Psoas muscle (tissue), 8 donors: ENCODE measurements at regions of chr3 and their contacts with region 1.

Region 1: DNA sequence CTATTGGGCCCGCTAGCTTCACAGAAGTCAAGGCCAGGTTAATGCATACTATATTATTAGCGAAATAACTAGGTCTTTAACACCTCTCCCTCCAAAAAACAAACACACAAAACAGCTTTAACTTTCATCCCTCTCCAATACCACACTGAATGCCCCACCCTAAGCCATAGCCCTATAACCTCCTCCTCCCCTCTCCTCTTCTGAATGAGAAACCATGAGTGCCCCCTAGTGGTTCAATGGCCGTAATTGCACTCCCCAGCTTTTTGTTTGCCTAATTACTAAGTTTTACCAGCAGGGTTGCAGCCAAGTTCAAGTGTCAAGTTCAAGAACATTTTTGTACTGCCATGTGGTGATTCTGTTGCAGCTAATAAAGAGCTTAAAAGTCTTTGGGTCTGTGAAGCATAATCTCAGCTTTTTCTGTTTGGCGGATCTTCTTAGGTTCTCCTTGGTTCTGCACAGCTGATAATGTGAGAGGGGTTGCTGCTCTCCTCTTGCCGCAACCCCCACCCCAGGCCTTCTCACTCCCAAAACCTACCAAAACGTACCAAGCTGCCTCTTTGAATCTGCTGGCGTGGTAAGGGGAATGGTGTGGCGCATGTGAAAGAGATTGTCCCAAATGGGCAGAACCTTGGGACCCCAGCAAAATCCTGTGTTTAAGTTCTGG is 57.9 kb downstream of the RPL22L1 start:
- DNase-seq: peak; percentile 23 to 56
- ATAC-seq: peak in 3 of 4 donors; percentile 74 to 79 (median 77)
- H3K4me3 ChIP-seq: no peak overlapping the region
- H3K27ac ChIP-seq: no peak overlapping the region
- H3K4me1 ChIP-seq: no peaks in the 10 kb centered on the region
- H3K27me3 ChIP-seq: no peaks in the 10 kb centered on the region
- CTCF ChIP-seq: peak; percentile 73

Region 2: DNA sequence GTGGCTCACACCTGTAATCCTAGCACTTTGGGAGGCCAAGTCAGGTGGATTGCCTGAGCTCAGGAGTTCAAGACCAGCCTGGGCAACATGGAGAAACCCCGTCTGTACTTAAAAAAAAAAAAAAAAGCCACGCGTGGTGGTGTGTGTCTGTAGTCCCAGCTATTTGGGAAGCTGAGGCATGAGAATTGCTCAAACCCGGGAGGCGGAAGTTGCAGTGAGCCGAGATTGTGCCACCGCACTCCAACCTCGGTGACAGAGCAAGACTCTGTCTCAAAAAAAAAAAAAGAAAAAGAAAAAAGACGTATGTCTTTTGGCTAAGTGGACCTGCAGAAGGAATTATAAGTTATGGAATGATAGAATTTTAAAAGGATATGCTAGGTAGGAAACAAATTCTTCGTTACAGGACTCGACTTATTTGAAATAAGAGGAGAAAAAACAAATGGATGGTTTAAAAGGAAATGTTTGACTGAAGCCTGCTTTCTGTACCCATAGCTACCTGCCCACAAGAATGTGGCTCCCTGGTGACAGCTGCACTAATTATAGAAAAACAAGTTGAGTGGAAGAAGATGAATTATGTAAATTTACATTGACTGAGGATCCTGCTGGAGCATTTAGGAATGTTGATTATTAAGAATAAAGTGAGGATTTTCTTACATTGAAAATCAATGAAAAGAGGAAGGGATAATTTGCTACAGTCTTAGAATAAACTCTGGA is 490.6 kb before region 1 on chr3:
- intact Hi-C with region 1: loop called in 1 of 2 experiments (anchors 10 kb)
- DNase-seq: no peak
- ATAC-seq: no peak
- H3K4me3 ChIP-seq: no peak overlapping the region
- H3K27ac ChIP-seq: no peak overlapping the region
- H3K4me1 ChIP-seq: no peaks in the 10 kb centered on the region
- H3K27me3 ChIP-seq: no peaks in the 10 kb centered on the region
- CTCF ChIP-seq: no peak

Region 3: DNA sequence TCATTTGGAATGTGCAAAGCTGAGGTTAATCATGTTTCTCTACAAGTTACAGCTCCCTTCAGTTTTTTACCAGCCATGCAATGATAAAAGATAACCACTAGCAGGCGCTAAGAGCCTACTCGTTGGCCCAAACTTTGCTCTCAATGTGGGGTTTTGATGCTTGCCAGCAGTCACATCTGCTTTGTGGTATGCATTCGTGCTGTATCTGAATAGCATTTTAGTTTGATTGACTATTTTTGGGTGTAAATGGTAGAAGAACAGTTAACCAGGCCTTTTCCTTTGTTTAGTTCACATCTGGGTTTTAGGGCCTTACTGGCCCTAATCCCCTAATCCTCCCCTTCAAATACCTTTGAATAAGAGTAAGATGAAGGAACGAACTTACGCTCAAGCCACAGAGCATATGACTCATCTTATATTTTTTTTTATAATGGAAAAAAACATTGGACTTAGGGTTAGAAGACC is 397.8 kb before region 1 on chr3:
- intact Hi-C with region 1: loop called (anchors 5 to 10 kb)
- DNase-seq: no peak
- ATAC-seq: peak in 3 of 4 donors; percentile 46 to 74 (median 52)
- H3K4me3 ChIP-seq: no peak overlapping the region
- H3K27ac ChIP-seq: no peak overlapping the region
- H3K4me1 ChIP-seq: peaks cover 8% of the 10 kb centered on the region
- H3K27me3 ChIP-seq: peaks cover 0 to 30% (median 7%) of the 10 kb centered on the region in 3 donors
- CTCF ChIP-seq: peak; percentile 83

Region 4: GRCh38 chr3:171172070-171172469 is 360.0 kb after region 1 on chr3:
- intact Hi-C with region 1: no loop called
- DNase-seq: no peak
- ATAC-seq: no peak
- H3K4me3 ChIP-seq: no peak overlapping the region
- H3K27ac ChIP-seq: no peak overlapping the region
- H3K4me1 ChIP-seq: peaks cover 14% of the 10 kb centered on the region
- H3K27me3 ChIP-seq: no peaks in the 10 kb centered on the region
- CTCF ChIP-seq: no peak